Gastrocnemius medialis (tissue), 4 donors: ENCODE measurements at regions of chr1 and their contacts with region 1.

Region 1: DNA sequence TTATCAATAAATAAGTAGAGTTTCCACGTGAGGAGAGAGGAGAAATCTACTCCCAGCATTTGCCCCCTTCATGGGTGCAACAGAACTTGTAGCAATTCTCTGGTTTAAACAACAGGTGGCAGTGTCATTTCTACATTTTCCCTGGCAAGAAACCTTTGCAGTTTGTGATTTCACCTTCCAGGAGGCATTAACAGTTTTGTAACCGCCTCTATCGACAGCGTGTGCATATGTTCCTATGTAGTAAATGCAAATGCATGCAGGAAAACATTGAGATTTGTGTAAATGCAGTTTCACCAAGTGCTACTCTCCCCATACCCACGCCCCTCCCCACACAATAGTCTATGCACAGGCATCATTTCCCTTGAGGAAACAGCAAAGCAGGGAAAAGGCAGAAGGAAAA is 494.7 kb downstream of the SMYD3 start:
- DNase-seq: no peak
- ATAC-seq: peak in 1 of 2 donors; percentile 39
- H3K4me3 ChIP-seq: no peak overlapping the region
- H3K27ac ChIP-seq: no peak overlapping the region
- H3K4me1 ChIP-seq: peaks cover 0 to 4% of the 10 kb centered on the region in 2 donors
- H3K27me3 ChIP-seq: no peaks in the 10 kb centered on the region
- CTCF ChIP-seq: peak in 4 of 5 experiments; percentile 29 to 57 (median 48)
- POLR2A ChIP-seq: no peak

Region 2: DNA sequence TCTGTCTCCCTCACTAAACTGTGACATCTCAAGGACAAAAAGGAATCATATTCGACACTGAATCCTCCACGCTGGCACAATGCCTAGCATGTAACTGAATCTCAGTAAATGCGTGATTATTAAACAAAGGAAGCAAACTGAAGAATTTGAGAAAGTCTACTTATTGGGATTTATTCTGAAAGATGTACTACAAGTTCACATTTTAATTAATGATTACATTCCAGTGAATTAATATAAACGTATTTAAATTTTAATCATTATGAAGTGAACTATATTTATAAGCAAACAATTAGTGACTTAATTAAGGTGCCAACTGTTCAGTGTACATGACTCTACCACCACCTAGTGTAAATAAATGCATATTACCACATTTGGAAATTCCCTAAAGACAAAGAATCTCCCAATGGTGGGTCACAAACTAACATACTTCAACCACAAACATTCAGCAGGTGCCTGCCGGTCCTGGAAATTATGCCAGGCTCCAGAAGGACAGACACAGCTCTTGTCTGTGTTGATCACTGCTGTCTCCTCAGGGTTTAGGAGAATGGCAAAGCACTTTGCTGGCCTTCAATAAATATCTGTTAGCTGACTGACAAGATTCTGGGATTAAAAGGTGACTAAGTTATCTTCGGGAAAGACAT is 438.4 kb after region 1 on chr1:
- in situ Hi-C with region 1: no loop called
- intact Hi-C with region 1: loop called (anchors 2 kb)
- DNase-seq: no peak
- ATAC-seq: no peak
- H3K4me3 ChIP-seq: no peak overlapping the region
- H3K27ac ChIP-seq: no peak overlapping the region
- H3K4me1 ChIP-seq: peaks cover 31% of the 10 kb centered on the region in 2 donors
- H3K27me3 ChIP-seq: no peaks in the 10 kb centered on the region
- CTCF ChIP-seq: peak; percentile 35 to 73 (median 48)
- POLR2A ChIP-seq: no peak